ENCODE measurements at regions of chr1 and their contacts with region 1.

Region 1: DNA sequence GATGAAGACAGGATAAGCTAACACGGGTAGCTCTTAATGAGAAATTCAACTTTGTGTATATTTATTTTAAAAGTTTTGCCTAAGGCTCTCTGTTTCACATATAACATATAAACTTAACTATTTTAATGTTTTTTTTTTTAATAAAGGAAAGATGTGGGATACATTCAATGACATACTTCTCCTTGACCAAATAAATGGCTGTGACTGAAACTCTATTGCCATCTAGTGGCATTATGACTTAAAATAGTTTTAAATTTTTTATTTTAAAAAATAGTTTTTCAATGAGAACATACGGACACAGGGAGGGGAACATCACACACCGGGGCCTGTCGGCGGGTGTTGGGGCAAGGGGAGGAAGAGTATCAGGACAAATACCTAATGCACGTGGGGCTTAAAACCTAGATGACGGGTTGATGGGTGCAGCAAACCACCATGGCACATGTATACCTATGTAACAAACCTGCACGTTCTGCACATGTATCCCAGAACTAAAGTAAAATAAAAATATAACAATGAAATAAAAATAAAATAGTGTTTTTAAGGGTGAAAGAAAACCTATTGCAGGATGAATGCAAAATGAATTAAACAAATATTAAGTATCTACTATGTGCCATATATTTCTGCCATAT is 83.4 kb downstream of the LYST start:
- DNase-seq: no peak
- ATAC-seq: no peak
- H3K4me3 Mint-ChIP-seq: no peak overlapping the region
- H3K27ac Mint-ChIP-seq: no peak overlapping the region
- H3K4me1 Mint-ChIP-seq: no peaks in the 10 kb centered on the region
- H3K27me3 Mint-ChIP-seq: no peaks in the 10 kb centered on the region
- CTCF ChIP-seq: no peak

Region 2: DNA sequence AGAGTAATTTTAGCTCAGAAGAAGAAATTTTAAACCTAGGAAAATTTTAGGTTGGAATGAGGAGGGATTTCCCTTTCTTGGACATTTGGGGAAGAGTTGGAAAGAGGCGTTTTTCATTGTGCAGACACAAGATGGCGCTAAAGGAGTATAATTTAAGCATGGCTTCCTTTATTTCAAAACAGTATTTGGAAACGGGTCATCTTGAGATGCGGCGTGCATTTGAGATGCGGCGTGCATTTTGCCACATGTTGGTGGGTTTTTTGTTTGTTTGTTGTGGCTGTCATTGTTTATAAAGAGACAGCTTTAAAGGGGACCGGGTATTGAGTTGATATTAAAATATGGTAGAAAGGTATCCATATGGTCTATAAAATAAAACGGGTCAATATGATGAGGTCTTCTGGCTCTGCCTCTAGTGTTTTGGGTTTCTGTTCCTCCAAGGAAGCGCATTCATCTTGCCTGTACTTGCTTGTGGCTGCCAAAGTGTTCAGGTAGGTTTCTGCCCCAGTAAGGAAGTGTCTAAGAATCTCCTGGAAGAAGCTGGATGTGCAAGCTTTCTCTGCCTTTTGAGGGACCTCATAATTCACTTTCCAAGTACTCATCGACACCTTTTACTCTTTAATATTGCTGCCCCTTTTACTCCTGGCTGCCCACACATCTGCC is 1668.5 kb before region 1 on chr1:
- CTCF ChIA-PET with region 1: no interaction called
- POLR2A ChIA-PET with region 1: no interaction called
- intact Hi-C with region 1: loop called (anchors 10 kb)
- DNase-seq: no peak
- ATAC-seq: no peak
- H3K4me3 Mint-ChIP-seq: no peak overlapping the region
- H3K27ac Mint-ChIP-seq: no peak overlapping the region
- H3K4me1 Mint-ChIP-seq: peaks cover 4% of the 10 kb centered on the region
- H3K27me3 Mint-ChIP-seq: peaks cover 6% of the 10 kb centered on the region
- CTCF ChIP-seq: no peak

Region 3: DNA sequence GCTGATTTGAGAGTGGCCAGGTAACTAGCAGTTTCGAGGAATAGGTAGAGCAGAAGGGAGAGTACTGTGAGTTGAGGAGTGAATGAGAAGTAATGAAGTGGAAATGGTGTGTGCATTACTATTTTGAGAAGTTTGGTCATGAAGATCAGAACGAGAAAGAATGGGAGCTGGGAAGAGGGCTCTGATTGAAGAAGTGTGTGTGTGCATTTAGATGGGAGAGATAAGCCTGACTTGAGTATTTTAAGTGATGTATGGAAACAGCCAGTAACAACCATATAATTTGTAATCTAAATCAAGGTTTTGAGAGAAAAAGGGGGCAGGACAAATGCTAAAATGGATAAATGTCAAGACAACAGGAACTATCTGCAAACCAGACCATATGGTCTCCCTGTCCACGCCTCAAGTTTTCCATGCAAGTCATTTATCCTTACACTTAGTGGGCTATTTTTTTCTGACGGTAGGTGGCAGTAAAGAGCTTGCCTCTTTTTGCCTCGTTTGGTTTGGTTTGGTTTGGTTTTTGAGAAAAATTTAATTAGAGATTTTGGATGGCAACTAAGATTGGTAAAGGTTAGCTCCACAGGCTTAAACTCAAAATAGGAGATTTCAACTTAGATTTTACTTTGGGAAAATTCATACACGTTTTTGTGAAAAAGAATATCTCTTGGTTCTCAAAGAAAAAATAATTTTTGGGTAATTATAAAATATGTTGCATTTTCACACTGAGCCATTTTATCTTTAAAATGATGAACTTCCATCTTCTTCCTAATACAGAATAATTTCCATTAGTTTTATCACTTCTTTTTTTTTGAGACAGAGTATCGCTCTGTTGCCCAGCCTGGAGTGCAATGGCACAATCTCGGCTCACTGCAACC is 269.5 kb before region 1 on chr1:
- CTCF ChIA-PET with region 1: interaction called, 12 read pairs
- POLR2A ChIA-PET with region 1: no interaction called
- intact Hi-C with region 1: loop called (anchors 1 kb)
- DNase-seq: no peak
- ATAC-seq: peak; percentile 68
- H3K4me3 Mint-ChIP-seq: no peak overlapping the region
- H3K27ac Mint-ChIP-seq: no peak overlapping the region
- H3K4me1 Mint-ChIP-seq: peaks cover 1% of the 10 kb centered on the region
- H3K27me3 Mint-ChIP-seq: peaks cover 5% of the 10 kb centered on the region
- CTCF ChIP-seq: peak; percentile 67

Region 4: DNA sequence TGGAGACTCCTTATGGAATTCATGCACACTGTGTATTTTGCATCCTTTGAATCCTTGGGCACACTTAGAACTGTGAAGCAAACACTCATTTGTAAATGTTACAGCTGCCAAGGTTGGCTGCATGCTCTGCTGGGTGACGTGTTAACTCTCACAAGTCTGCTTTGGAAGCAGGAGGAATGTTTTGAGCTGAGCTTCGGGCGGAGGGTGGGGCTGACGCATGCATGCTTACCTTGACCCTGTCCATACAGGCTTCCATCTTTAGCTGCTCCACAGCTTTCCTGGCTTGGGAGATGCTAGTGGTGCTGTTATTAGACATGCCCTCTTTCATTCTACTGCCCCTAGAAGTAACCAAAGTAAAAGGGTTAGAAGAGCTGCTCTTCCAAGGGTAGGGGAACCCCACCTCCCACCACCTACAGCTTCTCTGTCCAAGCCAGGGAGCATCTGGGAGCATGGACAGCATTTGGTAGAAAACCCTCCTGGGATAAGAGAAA is 199.7 kb before region 1 on chr1:
- CTCF ChIA-PET with region 1: no interaction called
- POLR2A ChIA-PET with region 1: no interaction called
- intact Hi-C with region 1: no loop called
- DNase-seq: no peak
- ATAC-seq: no peak
- H3K4me3 Mint-ChIP-seq: no peak overlapping the region
- H3K27ac Mint-ChIP-seq: no peak overlapping the region
- H3K4me1 Mint-ChIP-seq: no peaks in the 10 kb centered on the region
- H3K27me3 Mint-ChIP-seq: peaks cover 14% of the 10 kb centered on the region
- CTCF ChIP-seq: no peak

Region 5: DNA sequence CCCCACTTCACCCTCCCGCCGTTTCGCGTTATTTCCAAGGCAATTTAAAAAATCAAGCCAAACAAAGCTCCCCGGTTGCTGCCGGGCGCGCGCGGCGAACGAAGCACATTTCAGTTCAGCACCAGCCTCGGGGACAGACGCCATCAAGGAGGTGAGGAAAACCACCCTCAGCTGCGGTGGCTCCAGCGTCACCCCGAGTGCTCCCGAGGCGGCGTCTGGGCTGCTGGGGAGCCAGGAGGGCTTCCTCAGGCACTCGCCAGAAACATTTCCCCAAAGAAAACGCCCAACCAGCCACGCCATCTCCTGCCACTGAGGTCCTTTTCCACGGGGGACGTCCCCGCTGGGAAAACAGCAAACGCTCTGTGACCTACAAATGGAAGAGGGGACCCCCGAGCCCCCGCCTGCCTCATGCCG is 134.3 kb before region 1 on chr1:
- CTCF ChIA-PET with region 1: no interaction called
- POLR2A ChIA-PET with region 1: no interaction called
- intact Hi-C with region 1: no loop called
- DNase-seq: peak; percentile 40
- ATAC-seq: peak; percentile 65
- H3K4me3 Mint-ChIP-seq: peak overlapping the region; percentile 88
- H3K27ac Mint-ChIP-seq: no peak overlapping the region
- H3K4me1 Mint-ChIP-seq: peaks cover 15% of the 10 kb centered on the region
- H3K27me3 Mint-ChIP-seq: peaks cover 62% of the 10 kb centered on the region
- CTCF ChIP-seq: no peak

Region 6: GRCh38 chr1:235821361-235821981 is 38.2 kb after region 1 on chr1:
- CTCF ChIA-PET with region 1: no interaction called
- POLR2A ChIA-PET with region 1: no interaction called
- intact Hi-C with region 1: no loop called
- DNase-seq: no peak
- ATAC-seq: no peak
- H3K4me3 Mint-ChIP-seq: no peak overlapping the region
- H3K27ac Mint-ChIP-seq: no peak overlapping the region
- H3K4me1 Mint-ChIP-seq: peaks cover 15% of the 10 kb centered on the region
- H3K27me3 Mint-ChIP-seq: no peaks in the 10 kb centered on the region
- CTCF ChIP-seq: no peak